ENCODE measurements at regions of chr10 and their contacts with region 1.

Region 1: GRCh38 chr10:128069351-128070051 is 56.7 kb downstream of the MKI67 start:
- DNase-seq: peak; percentile 70
- ATAC-seq: peak; percentile 72 to 91
- H3K4me3 ChIP-seq: no peak overlapping the region
- H3K27ac ChIP-seq: no peak overlapping the region
- H3K4me1 ChIP-seq: no peaks in the 10 kb centered on the region
- CTCF ChIP-seq: peak; percentile 89
- EP300 ChIP-seq: no peak
- POLR2A ChIP-seq: no peak
- RAD21 ChIP-seq: peak; percentile 86 to 89

Region 2: DNA sequence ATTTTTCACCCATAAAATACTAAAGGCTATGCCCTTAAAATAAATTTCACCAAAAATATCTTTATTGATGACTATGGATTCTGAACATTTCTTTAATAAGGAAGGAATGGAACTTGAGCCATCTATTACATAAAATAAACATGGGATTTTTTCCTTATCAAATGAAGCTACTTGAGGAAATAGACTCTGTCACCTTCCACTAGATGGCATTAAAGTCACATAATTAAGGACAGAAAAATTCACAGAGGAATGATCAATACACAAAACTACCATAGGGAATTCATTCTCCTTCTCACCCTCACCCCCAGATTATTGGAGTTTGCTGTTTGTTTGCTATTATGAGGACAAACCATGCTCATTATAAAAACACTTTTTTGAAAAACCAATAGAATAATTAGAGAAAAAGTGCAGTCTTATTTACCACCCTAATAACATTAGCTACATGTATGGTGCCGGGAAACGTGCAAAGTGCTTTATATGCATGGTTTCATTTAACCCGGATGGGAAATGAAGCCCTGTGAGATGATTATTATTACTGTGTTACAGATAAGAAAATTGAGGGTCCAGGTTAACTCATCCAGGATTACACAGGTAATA is 353.6 kb before region 1 on chr10:
- CTCF ChIA-PET with region 1: interaction called, 14 read pairs
- POLR2A ChIA-PET with region 1: no interaction called
- DNase-seq: peak in 1 of 2 experiments; percentile 28
- ATAC-seq: peak in 1 of 2 experiments; percentile 45; a peak in 1 of 6 replicates
- H3K4me3 ChIP-seq: no peak overlapping the region
- H3K27ac ChIP-seq: no peak overlapping the region
- H3K4me1 ChIP-seq: no peaks in the 10 kb centered on the region
- CTCF ChIP-seq: peak; percentile 62
- EP300 ChIP-seq: no peak
- POLR2A ChIP-seq: no peak
- RAD21 ChIP-seq: peak; percentile 62 to 69

Region 3: DNA sequence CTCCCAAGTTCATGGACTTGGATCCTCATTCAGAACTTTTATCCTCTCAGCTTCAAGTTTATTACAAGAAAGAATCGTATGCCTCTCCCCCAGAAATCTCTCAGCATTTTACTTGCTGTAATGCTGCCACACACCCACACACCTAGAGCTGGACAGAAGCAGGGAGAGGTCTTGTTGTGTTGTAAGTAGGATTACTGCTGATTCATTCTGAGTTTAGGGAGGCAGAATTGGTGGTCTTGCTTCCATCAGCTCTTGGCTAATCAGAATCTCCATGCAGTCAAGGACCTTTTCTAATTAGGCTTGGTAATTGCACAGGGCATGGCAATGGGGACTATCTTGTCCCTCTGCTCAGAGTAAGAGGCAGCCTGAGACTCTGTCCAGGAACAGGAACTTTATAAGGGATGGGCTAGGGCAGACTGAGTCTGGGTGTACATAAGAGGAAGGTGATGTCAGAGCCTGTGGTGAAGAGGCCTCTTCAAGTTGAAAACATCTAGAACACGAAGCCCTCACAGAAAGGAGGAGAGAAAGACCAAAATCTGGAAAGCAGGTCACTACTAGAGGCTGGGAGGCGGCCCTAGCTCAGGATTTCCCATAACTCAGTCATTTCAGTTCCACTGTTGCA is 169.6 kb before region 1 on chr10:
- CTCF ChIA-PET with region 1: interaction called, 89 read pairs
- POLR2A ChIA-PET with region 1: no interaction called
- DNase-seq: no peak
- ATAC-seq: no peak
- H3K4me3 ChIP-seq: no peak overlapping the region
- H3K27ac ChIP-seq: no peak overlapping the region
- H3K4me1 ChIP-seq: no peaks in the 10 kb centered on the region
- CTCF ChIP-seq: no peak
- EP300 ChIP-seq: no peak
- POLR2A ChIP-seq: no peak
- RAD21 ChIP-seq: no peak

Region 4: GRCh38 chr10:127906548-127907377 is 162.7 kb before region 1 on chr10 and contains the start of gene PTPRE:
- CTCF ChIA-PET with region 1: interaction called, 89 read pairs
- POLR2A ChIA-PET with region 1: interaction called, 3 read pairs
- DNase-seq: peak; percentile 44 to 77
- ATAC-seq: peak; percentile 97 to 98
- H3K4me3 ChIP-seq: peak within 1 kb of the TSS; percentile 73
- H3K27ac ChIP-seq: peak within 1 kb of the TSS; percentile 67 to 86
- H3K4me1 ChIP-seq: peaks cover 13% of the 10 kb centered on the region; the same call in 1 of the 3 replicates
- CTCF ChIP-seq: peak; percentile 88
- EP300 ChIP-seq: no peak
- POLR2A ChIP-seq: no peak
- RAD21 ChIP-seq: peak; percentile 69 to 94
- polyA plus RNA-seq, gene PTPRE: 0.22 and 0.31 TPM in 2 replicates

Region 5: GRCh38 chr10:128035557-128035973 is 33.9 kb before region 1 on chr10:
- CTCF ChIA-PET with region 1: interaction called, 39 read pairs
- POLR2A ChIA-PET with region 1: no interaction called
- DNase-seq: peak; percentile 17 to 50
- ATAC-seq: peak; percentile 70 to 90; a peak in 4 of 6 replicates
- H3K4me3 ChIP-seq: no peak overlapping the region
- H3K27ac ChIP-seq: no peak overlapping the region
- H3K4me1 ChIP-seq: peaks cover 8% of the 10 kb centered on the region; the same call in 1 of the 3 replicates
- CTCF ChIP-seq: peak; percentile 50
- EP300 ChIP-seq: no peak
- POLR2A ChIP-seq: no peak
- RAD21 ChIP-seq: peak in 1 of 2 experiments; percentile 56; a peak in 3 of 5 replicates

Region 6: DNA sequence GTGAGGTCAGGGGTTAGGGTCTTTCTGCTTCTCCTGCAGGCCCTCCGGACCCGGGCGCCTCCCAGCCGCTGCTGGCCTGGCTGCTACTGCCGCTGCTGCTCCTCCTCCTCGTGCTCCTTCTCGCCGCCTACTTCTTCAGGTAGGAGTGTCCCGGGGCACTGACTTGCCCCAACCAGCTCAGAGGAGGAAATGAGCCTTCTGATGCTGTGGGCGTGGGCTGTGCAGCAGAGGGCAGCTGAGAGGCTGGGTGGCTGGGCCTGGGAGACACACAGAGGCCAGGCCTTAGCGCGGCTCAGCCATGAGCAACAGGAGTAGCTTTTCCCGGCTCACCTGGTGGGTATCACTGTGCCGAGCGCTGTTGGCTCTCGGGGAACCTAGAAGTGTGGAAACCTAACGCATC is 22.1 kb before region 1 on chr10:
- CTCF ChIA-PET with region 1: interaction called, 18 read pairs
- POLR2A ChIA-PET with region 1: no interaction called
- DNase-seq: peak in 1 of 2 experiments; percentile 10
- ATAC-seq: peak; percentile 19 to 85; a peak in 3 of 6 replicates
- H3K4me3 ChIP-seq: no peak overlapping the region
- H3K27ac ChIP-seq: no peak overlapping the region
- H3K4me1 ChIP-seq: no peaks in the 10 kb centered on the region
- CTCF ChIP-seq: no peak
- EP300 ChIP-seq: no peak
- POLR2A ChIP-seq: no peak
- RAD21 ChIP-seq: no peak

Region 7: DNA sequence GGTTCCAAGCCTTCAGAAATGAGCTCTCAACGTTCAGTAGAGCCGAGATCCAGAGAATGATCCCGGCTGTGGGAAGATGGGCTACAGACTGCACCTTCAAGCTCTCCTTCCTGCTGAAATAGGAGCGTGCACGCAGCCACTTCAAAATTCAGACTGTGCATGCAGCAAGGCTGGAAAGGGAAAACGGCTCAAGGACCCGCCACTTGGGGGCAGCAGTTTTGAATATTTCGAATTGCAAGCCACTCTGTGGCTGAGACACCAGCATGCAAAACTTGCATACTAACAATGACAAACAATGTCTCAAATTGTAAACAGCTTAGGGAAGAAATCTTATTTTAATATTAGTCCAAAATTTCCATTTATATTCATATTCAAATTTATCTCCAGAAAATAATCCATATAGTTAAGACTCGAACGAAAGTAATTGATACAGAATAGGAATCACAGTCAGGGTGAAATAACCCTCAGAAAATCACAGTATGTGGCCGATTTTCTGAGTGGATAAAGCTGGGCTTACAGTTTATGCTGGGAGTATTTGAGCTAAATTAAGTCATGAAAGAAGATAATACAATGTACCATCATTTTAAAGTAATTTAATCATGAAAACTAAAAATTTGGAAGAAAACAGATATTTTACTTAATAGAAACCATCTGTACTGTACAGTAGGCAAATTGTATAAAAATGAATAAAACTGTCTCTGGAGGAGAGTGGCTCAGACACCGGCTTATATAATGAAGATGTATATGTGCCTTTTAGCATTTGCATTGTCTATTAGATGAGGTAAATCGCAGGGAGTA is 194.6 kb after region 1 on chr10:
- CTCF ChIA-PET with region 1: no interaction called
- POLR2A ChIA-PET with region 1: no interaction called
- DNase-seq: peak; percentile 33 to 64
- ATAC-seq: peak; percentile 86 to 92
- H3K4me3 ChIP-seq: no peak overlapping the region
- H3K27ac ChIP-seq: no peak overlapping the region
- H3K4me1 ChIP-seq: no peaks in the 10 kb centered on the region
- CTCF ChIP-seq: peak; percentile 68
- EP300 ChIP-seq: no peak
- POLR2A ChIP-seq: no peak
- RAD21 ChIP-seq: peak; percentile 43 to 56

Measured in A549 (cell line).